PC-9 (cell line): ENCODE measurements at regions of chr10 and their contacts with region 1.

Region 1: DNA sequence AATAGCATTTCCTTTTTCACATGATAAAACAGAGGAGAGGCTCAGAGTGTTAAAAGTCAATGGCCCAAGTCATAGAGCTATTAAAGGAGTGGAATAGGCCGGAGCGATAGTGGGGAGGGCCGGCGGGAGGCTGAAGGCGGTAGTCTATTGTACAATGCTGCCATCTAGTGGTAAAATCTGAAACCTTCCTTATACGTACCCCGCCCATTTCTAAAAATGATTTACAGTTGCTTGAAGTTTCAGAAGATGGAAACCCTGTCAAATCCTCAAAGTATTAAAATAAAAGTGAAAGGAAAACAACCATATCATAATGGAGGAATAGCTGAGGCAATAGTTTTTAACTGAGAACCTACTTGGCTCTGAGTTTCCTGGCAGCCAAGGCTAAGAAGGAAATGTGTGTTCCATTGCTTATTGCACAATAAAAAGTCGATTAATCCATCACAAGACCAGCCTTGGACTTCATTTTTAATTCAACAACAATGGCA is 209.1 kb downstream of the CCSER2 start:
- DNase-seq: peak; percentile 56 to 66
- H3K4me3 ChIP-seq: no peak overlapping the region
- H3K27ac ChIP-seq: no peak overlapping the region
- H3K4me1 ChIP-seq: peaks cover 12% of the 10 kb centered on the region
- H3K27me3 ChIP-seq: no peaks in the 10 kb centered on the region
- CTCF ChIP-seq: peak; percentile 99

Region 2: GRCh38 chr10:84352251-84352842 is 185.1 kb before region 1 on chr10:
- CTCF ChIA-PET with region 1: interaction called, 12 read pairs
- POLR2A ChIA-PET with region 1: interaction called, 10 read pairs
- intact Hi-C with region 1: no loop called
- DNase-seq: peak; percentile 51 to 52
- H3K4me3 ChIP-seq: no peak overlapping the region
- H3K27ac ChIP-seq: no peak overlapping the region
- H3K4me1 ChIP-seq: peaks cover 10% of the 10 kb centered on the region
- H3K27me3 ChIP-seq: no peaks in the 10 kb centered on the region
- CTCF ChIP-seq: peak; percentile 77

Region 3: DNA sequence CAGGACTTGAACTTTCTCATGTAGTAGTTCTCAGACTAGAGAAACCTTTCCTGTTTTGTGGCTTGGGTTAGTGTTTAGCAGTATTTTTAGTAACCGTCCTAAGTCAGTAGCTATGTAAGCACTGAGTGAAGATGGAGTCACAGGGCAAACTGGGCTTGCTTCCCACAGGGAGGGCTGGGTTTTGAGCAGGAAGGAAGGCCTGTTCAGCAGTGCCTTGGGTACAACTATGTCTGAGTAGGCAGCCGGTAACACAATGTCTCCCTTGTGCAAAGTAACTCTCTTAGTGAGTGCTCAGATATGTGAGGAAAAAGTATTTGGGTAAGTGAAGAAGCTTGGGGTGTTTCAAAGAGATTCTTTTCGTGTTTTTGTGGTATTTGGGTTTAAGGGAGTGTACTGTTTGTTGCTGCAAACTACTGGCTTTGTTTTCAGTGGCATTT is 112.7 kb before region 1 on chr10:
- CTCF ChIA-PET with region 1: interaction called, 45 read pairs
- POLR2A ChIA-PET with region 1: interaction called, 7 read pairs
- intact Hi-C with region 1: no loop called
- DNase-seq: peak; percentile 75 to 81
- H3K4me3 ChIP-seq: no peak overlapping the region
- H3K27ac ChIP-seq: peak overlapping the region; percentile 7
- H3K4me1 ChIP-seq: peaks cover 18% of the 10 kb centered on the region
- H3K27me3 ChIP-seq: no peaks in the 10 kb centered on the region
- CTCF ChIP-seq: no peak

Region 4: DNA sequence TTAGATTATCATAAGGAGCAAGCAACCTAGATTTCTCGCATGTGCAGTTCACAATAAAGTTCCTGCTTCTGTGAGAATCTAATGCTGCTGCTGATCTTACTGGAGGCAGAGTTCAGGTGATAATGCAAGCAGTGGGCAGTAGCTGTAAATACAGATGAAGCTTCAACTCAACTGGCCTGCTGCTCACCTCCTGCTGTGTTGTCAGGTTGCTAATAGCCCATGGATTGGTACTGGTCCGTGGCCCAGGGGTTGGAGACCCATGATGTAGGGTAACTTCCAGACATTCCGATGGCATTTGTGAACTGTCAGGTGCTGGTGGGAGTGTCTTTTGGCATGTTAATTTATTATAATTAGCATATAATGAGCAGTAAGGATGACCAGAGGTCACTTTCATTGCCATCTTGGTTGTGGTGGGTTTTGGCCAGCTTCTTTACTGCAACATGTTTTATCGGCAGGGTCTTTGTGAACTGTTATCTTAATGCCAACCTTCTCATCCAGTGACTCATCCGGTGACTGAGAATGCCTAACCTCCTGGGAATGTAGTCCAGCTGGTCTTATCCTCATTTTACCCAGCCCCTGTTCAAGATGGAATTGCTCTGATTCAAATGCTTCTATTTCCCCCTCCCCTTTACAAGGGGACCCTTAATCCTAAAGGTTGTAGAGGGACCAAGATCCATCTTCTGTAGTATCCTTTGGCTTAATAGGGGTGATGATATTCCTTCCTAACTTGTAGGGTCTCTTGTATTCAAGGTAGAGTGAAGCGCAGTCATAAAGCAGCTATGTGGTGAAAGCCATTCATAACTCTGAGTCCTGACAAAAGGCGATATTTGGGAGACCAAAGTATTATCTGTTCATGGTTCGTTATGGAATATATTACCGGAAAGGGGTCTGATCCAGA is 43.3 kb before region 1 on chr10:
- CTCF ChIA-PET with region 1: interaction called, 10 read pairs
- POLR2A ChIA-PET with region 1: interaction called, 5 read pairs
- intact Hi-C with region 1: loop called (anchors 1 kb)
- DNase-seq: peak; percentile 81 to 96
- H3K4me3 ChIP-seq: peak overlapping the region; percentile 51
- H3K27ac ChIP-seq: peak overlapping the region; percentile 83
- H3K4me1 ChIP-seq: peaks cover 59% of the 10 kb centered on the region
- H3K27me3 ChIP-seq: no peaks in the 10 kb centered on the region
- CTCF ChIP-seq: 0 out of 2 replicates have a peak, but pooled peaks have one; percentile 12